ENCODE measurements at regions of chr7 and their contacts with region 1.

Region 1: DNA sequence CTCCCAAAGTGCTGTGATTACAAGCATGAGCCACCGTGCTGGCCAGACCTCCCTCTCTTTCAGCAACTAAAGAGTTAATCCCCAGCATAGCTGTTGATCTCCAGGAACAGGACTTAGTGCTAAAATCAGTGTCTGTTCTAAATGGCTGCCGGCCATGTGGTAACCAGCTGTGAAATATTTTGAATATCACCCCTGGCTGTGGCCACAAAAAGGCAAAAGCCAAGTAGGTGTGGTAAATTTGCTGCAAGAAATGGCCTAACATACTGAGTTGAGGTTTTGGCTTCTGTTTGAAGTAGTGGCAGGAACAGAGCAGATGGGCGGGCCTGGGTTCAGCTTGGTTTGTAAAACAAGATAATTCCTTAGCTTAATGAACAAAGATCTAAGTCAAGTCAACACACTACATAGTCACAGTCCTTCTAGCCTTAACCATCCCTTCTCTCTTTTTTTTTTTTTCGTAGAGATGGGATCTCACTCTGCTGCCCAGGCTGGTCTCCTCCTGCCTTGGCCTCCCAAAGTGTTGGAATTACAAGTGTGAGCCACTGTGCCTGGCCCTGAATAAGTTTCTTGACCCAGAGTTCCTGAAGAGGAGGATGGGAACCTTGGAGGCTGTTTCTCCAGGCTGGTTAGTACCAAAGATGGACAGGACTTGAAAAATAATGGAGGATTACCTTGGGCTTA is 22.7 kb upstream of the AGFG2 start:
- DNase-seq: peak in 4 of 5 donors; percentile 13 to 46 (median 26)
- ATAC-seq: peak; percentile 42 to 83 (median 74)
- H3K4me3 ChIP-seq: no peak overlapping the region
- H3K27ac ChIP-seq: peak overlapping the region in 1 of 12 donors; percentile 52
- H3K4me1 ChIP-seq: peaks cover 0 to 20% (median 0%) of the 10 kb centered on the region in 12 donors
- H3K27me3 ChIP-seq: no peaks in the 10 kb centered on the region
- CTCF ChIP-seq: no peak
- POLR2A ChIP-seq: no peak

Region 2: GRCh38 chr7:100456558-100456957 is 59.7 kb before region 1 on chr7:
- intact Hi-C with region 1: no loop called
- DNase-seq: no peak
- ATAC-seq: no peak
- H3K4me3 ChIP-seq: no peak overlapping the region
- H3K27ac ChIP-seq: no peak overlapping the region
- H3K4me1 ChIP-seq: no peaks in the 10 kb centered on the region
- H3K27me3 ChIP-seq: no peaks in the 10 kb centered on the region
- CTCF ChIP-seq: no peak
- POLR2A ChIP-seq: no peak

Region 3: GRCh38 chr7:100753750-100754149 is 237.5 kb after region 1 on chr7:
- intact Hi-C with region 1: loop called in 1 of 10 experiments (anchors 5 kb)
- DNase-seq: no peak
- ATAC-seq: no peak
- H3K4me3 ChIP-seq: no peak overlapping the region
- H3K27ac ChIP-seq: no peak overlapping the region
- H3K4me1 ChIP-seq: no peaks in the 10 kb centered on the region
- H3K27me3 ChIP-seq: peaks cover 0 to 24% (median 5%) of the 10 kb centered on the region in 9 donors
- CTCF ChIP-seq: no peak
- POLR2A ChIP-seq: no peak

Measured in heart left ventricle (tissue), 16 donors.